ENCODE measurements at regions of chr20 and their contacts with region 1.

Region 1: GRCh38 chr20:62302341-62303058 is at the start of gene ADRM1:
- DNase-seq: peak; percentile 100
- H3K4me3 Mint-ChIP-seq: peak within 1 kb of the TSS; percentile 84
- H3K27ac Mint-ChIP-seq: peak within 1 kb of the TSS; percentile 86
- H3K4me1 Mint-ChIP-seq: peaks cover 28% of the 10 kb centered on the region
- H3K27me3 Mint-ChIP-seq: no peaks in the 10 kb centered on the region
- CTCF ChIP-seq: peak; percentile 98
- total RNA-seq, gene ADRM1: 222 and 227 TPM in 2 replicates

Region 2: DNA sequence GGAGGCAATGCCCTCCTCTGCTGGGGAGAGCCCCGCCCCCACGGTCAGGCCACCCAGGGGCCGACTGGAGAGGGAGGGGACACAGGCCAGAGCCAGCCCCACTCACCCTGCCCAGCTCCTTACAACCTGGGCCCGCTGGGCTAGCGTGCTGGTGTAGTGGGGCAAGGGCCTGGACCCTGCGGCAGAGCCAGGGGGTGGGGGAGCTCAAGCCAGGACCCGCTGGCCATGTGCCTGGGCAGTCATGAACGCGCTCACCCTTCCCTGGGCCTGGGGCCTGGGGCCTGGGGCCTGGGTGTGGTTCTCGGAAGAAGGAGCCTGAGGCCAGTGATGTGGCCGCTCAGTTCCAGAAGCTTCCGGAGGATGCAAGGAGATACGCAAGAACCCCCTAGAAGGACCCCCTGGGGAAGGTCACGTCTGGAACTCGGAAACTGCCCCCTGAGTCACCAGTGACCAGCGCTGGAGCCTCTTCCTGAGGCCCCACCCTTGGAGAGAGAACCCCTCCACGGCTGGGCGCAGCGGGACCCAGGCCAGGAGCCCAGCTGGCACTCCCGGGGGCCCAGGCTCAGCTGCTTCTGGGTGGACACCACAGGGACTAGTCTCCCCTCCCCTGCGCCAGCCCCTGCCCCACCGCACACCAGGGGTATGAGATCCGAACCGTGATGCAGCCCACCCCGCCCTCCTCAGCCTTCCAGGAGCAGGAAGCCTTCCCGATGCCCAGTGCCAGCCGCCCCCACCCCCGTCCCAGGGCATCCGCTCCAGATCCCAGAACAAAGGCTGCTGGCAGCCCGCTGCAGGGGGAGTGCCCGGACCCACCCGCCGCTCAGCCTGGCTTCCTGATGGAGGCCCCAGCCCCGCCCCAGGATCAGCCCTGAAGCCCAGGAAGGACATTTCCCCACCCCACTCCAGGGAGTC is 57.0 kb after region 1 on chr20:
- CTCF ChIA-PET with region 1: interaction called, 14 read pairs
- intact Hi-C with region 1: no loop called
- DNase-seq: peak; percentile 89
- H3K4me3 Mint-ChIP-seq: peak overlapping the region; percentile 74
- H3K27ac Mint-ChIP-seq: peak overlapping the region; percentile 87
- H3K4me1 Mint-ChIP-seq: peaks cover 83% of the 10 kb centered on the region
- H3K27me3 Mint-ChIP-seq: no peaks in the 10 kb centered on the region
- CTCF ChIP-seq: no peak

Region 3: DNA sequence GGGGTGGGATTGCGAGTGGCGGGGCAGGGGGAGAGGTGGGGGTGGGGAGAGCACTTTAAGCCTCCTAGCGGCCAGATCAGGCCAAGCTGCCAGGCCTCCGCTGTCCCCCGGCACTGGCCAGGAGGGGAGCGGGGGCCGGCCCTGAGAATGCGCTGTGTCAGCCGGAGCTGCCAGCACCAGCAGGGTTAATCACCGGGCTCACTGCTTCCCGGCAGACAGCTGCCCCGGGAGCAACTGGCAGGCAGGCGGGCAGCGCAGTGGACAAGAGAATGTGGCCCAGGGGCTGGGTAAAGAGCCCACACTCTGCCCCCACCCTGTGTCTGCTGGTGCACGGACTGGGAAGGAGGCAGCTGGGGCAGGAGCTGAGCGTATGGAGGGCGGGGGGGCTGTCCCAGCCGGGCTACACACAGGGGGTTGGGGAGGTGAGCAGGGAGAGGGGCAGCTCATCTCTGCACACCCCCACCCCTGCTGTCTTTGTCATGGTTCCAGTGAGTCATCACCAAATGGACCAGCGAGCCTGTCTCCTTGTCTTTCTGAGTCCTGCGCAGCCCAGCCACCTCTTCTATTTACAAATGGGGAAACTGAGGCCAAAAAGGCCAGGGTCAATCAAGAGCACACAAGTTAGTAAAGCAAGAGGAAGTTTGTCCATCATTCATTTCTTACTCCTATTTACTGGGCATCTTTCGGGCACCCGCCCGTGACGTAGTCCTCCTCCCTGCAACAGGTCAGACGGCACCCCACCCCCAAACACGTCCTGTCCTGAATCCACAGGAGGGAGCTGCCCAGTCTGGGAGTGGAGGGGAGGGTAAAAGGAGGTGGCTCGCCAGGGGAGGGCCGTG is 66.7 kb after region 1 on chr20:
- CTCF ChIA-PET with region 1: interaction called, 18 read pairs
- intact Hi-C with region 1: no loop called
- DNase-seq: peak; percentile 62
- H3K4me3 Mint-ChIP-seq: peak overlapping the region; percentile 79
- H3K27ac Mint-ChIP-seq: no peak overlapping the region
- H3K4me1 Mint-ChIP-seq: peaks cover 37% of the 10 kb centered on the region
- H3K27me3 Mint-ChIP-seq: no peaks in the 10 kb centered on the region
- CTCF ChIP-seq: peak; percentile 81

Region 4: DNA sequence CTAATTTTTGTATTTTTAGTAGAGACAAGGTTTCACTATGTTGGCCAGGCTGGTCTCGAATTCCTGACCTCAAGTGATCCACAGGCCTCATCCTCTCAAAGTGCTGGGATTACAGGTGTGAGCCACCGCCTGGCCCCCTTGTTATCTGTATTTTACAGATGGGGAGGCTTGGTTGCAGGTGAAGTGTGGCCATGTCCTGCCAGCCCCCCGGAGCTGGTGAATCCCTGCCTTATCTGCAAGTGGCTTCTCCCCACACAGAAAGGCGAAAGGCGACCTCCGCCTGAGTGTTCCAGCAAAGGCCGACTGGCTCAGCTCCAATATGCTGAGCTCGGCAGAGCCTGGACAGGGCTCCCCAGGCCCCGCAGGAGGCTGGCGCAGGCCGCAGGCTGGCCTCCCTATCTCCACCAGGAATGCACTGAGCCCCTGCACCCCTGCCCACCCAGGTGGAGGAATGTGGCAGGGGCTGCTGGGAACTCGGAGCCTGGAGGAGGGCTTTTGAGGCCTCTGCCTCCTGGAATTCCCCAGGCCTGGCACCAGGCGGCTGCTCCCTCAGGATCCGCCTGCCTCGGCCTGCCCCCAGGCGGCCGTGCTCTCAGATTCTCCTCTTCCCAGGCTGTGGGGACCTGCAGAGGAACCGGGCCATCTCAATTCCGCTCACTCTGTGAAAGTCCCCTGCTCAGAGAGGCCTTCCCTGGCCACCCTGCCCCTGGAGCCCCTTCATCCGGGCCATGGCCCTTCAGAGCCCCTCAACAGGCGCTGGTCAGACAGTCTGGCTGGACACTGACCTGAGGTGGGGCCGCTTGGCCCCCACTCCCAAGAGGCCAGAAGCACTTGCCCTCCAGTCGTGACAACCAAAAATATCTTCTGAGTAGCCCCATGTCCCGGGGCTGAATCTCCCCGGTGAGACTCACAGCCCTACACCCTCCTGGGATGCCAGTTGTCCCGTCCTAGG is 73.9 kb after region 1 on chr20:
- CTCF ChIA-PET with region 1: interaction called, 13 read pairs
- intact Hi-C with region 1: no loop called
- DNase-seq: peak; percentile 82
- H3K4me3 Mint-ChIP-seq: no peak overlapping the region
- H3K27ac Mint-ChIP-seq: no peak overlapping the region
- H3K4me1 Mint-ChIP-seq: peaks cover 15% of the 10 kb centered on the region
- H3K27me3 Mint-ChIP-seq: no peaks in the 10 kb centered on the region
- CTCF ChIP-seq: peak; percentile 68

Region 5: DNA sequence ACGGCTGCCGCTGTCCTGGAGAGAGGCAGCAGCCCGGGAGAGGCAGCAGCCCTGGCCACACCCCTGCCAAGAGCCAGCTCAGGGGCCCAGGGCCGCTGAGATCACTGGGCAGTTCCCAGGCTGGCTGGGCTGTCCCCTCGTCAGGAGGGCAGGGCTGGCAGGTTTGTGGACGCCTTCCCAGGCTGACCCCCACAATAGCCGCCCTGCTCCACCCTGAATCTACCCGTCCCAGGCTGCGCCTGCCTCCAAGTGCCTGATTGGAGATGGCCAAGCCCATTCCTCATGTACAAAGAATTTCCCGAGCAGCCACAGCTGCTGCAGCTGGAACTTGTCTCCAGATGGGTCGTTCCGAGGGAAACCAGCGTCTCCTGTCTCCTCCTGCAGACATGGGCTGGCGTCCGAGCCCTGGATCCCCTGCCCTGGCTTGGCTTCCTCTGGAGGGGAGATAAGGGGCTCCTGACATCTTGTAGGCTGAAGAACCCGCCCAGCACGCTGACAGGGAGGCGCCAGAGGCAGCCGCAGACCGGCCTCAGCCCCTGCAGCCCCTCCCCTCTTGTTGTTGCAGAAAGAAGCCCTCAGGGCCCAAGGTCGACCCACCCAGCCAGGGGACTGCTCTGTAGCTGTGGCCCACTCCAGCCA is 182.7 kb after region 1 on chr20:
- CTCF ChIA-PET with region 1: no interaction called
- intact Hi-C with region 1: loop called (anchors 10 kb)
- DNase-seq: peak; percentile 41
- H3K4me3 Mint-ChIP-seq: no peak overlapping the region
- H3K27ac Mint-ChIP-seq: no peak overlapping the region
- H3K4me1 Mint-ChIP-seq: peaks cover 7% of the 10 kb centered on the region
- H3K27me3 Mint-ChIP-seq: peaks cover 86% of the 10 kb centered on the region
- CTCF ChIP-seq: no peak